ENCODE measurements at regions of chr4 and their contacts with region 1.

Region 1: DNA sequence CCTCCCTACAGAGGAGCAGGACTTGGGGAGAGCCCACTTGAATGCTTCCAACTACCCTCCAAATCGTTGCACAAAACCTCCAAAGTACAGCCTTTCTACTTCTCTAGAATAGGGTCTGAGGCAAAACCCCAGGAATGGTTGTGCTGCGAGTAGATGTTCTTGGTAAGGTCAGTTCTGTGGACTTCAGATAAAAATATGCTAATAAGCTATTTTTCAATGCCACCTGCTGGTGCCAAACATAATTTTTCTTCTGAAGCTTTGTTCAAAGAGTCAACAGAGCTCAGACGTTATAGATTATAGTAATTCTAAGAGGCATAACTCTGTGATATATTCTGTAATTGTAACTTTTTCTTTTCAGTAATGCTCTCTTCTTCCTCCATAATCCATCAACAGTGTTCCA is 425.7 kb downstream of the GPAT3 start:
- DNase-seq: peak; percentile 5
- H3K27ac ChIP-seq: no peak overlapping the region
- CTCF ChIP-seq: no peak

Region 2: GRCh38 chr4:83644677-83645659 is 316.6 kb before region 1 on chr4:
- CTCF ChIA-PET with region 1: interaction called, 14 read pairs
- POLR2A ChIA-PET with region 1: no interaction called
- DNase-seq: peak; percentile 54
- H3K27ac ChIP-seq: no peak overlapping the region
- CTCF ChIP-seq: peak; percentile 86

Region 3: GRCh38 chr4:83771113-83771705 is 190.4 kb before region 1 on chr4:
- CTCF ChIA-PET with region 1: interaction called, 10 read pairs
- POLR2A ChIA-PET with region 1: no interaction called
- DNase-seq: peak; percentile 72
- H3K27ac ChIP-seq: no peak overlapping the region
- CTCF ChIP-seq: peak; percentile 70